ENCODE measurements at regions of chrX and their contacts with region 1.

Region 1: GRCh38 chrX:150898343-150899190 is at the start of gene CD99L2:
- DNase-seq: peak; percentile 91
- ATAC-seq: peak; percentile 91
- H3K4me3 ChIP-seq: peak within 1 kb of the TSS; percentile 8 to 79 (median 66)
- H3K4me3 Mint-ChIP-seq: peak within 1 kb of the TSS; percentile 97
- H3K27ac ChIP-seq: peak within 1 kb of the TSS; percentile 29 to 70
- H3K27ac Mint-ChIP-seq: peak within 1 kb of the TSS; percentile 88
- H3K4me1 ChIP-seq: peaks cover 0 to 10% of the 10 kb centered on the region in 2 donors
- H3K4me1 Mint-ChIP-seq: peaks cover 13% of the 10 kb centered on the region
- H3K27me3 ChIP-seq: no peaks in the 10 kb centered on the region
- H3K27me3 Mint-ChIP-seq: peaks cover 7% of the 10 kb centered on the region
- CTCF ChIP-seq: no peak
- total RNA-seq, gene CD99L2: 16.0 and 17.8 TPM in 2 replicates

Region 2: GRCh38 chrX:150365051-150365989 is 533.2 kb before region 1 on chrX:
- CTCF ChIA-PET with region 1: no interaction called
- POLR2A ChIA-PET with region 1: no interaction called
- intact Hi-C with region 1: loop called (anchors 5 kb)
- DNase-seq: peak; percentile 58
- ATAC-seq: peak; percentile 12
- H3K4me3 ChIP-seq: peak overlapping the region; percentile 39 to 62 (median 59)
- H3K4me3 Mint-ChIP-seq: peak overlapping the region; percentile 86
- H3K27ac ChIP-seq: no peak overlapping the region
- H3K27ac Mint-ChIP-seq: peak overlapping the region; percentile 20
- H3K4me1 ChIP-seq: peaks cover 17 to 43% of the 10 kb centered on the region in 2 donors
- H3K4me1 Mint-ChIP-seq: peaks cover 31% of the 10 kb centered on the region
- H3K27me3 ChIP-seq: peaks cover 0 to 9% (median 5%) of the 10 kb centered on the region in 4 experiments
- H3K27me3 Mint-ChIP-seq: peaks cover 10% of the 10 kb centered on the region
- CTCF ChIP-seq: peak; percentile 41

Region 3: GRCh38 chrX:150693775-150694574 is 204.6 kb before region 1 on chrX:
- CTCF ChIA-PET with region 1: no interaction called
- POLR2A ChIA-PET with region 1: no interaction called
- intact Hi-C with region 1: loop called (anchors 5 kb)
- DNase-seq: peak; percentile 87
- ATAC-seq: peak; percentile 65
- H3K4me3 ChIP-seq: peak overlapping the region; percentile 28 to 65 (median 57)
- H3K4me3 Mint-ChIP-seq: peak overlapping the region; percentile 98
- H3K27ac ChIP-seq: peak overlapping the region; percentile 87 to 89
- H3K27ac Mint-ChIP-seq: peak overlapping the region; percentile 100
- H3K4me1 ChIP-seq: peaks cover 53 to 67% of the 10 kb centered on the region in 2 donors
- H3K4me1 Mint-ChIP-seq: peaks cover 62% of the 10 kb centered on the region
- H3K27me3 ChIP-seq: no peaks in the 10 kb centered on the region
- H3K27me3 Mint-ChIP-seq: no peaks in the 10 kb centered on the region
- CTCF ChIP-seq: no peak

Region 4: GRCh38 chrX:150982788-150983520 is 84.4 kb after region 1 on chrX and contains the start of gene HMGB3:
- CTCF ChIA-PET with region 1: no interaction called
- POLR2A ChIA-PET with region 1: no interaction called
- intact Hi-C with region 1: loop called (anchors 1 kb)
- DNase-seq: peak; percentile 79
- ATAC-seq: peak; percentile 96
- H3K4me3 ChIP-seq: peak within 1 kb of the TSS; percentile 7 to 63 (median 49)
- H3K4me3 Mint-ChIP-seq: peak within 1 kb of the TSS; percentile 80
- H3K27ac ChIP-seq: no peak within 1 kb of the TSS
- H3K27ac Mint-ChIP-seq: no peak within 1 kb of the TSS
- H3K4me1 ChIP-seq: peaks cover 8 to 15% of the 10 kb centered on the region in 2 donors
- H3K4me1 Mint-ChIP-seq: peaks cover 8% of the 10 kb centered on the region
- H3K27me3 ChIP-seq: peaks cover 0 to 15% (median 5%) of the 10 kb centered on the region in 4 experiments
- H3K27me3 Mint-ChIP-seq: peaks cover 16% of the 10 kb centered on the region
- CTCF ChIP-seq: no peak
- total RNA-seq, gene HMGB3: 0.70 and 1.6 TPM in 2 replicates

Region 5: DNA sequence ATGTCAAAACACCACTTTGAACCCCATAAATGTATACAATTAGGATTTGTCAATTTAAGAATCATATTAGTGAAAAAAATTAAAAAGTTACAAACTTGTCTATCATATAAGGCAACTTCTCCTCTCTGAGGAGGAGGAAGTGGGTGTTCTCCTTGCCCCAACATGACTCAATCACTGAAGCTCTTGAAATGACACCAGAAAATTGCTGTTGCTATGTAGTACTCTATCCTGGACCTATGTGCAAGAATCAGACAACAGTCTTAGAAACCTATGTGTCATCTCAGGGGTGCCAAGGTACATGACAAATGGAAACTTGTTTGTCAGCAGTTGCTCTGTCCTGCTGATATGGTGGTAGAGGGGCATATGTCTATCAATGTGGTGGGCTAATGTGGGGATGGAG is 132.3 kb after region 1 on chrX:
- CTCF ChIA-PET with region 1: no interaction called
- POLR2A ChIA-PET with region 1: no interaction called
- intact Hi-C with region 1: no loop called
- DNase-seq: no peak
- ATAC-seq: no peak
- H3K4me3 ChIP-seq: no peak overlapping the region
- H3K4me3 Mint-ChIP-seq: no peak overlapping the region
- H3K27ac ChIP-seq: no peak overlapping the region
- H3K27ac Mint-ChIP-seq: no peak overlapping the region
- H3K4me1 ChIP-seq: no peaks in the 10 kb centered on the region
- H3K4me1 Mint-ChIP-seq: no peaks in the 10 kb centered on the region
- H3K27me3 ChIP-seq: peaks cover 0 to 3% (median under 1%) of the 10 kb centered on the region in 4 experiments
- H3K27me3 Mint-ChIP-seq: peaks cover 29% of the 10 kb centered on the region
- CTCF ChIP-seq: no peak

Region 6: GRCh38 chrX:151396825-151397740 is 498.5 kb after region 1 on chrX and contains the start of gene VMA21:
- CTCF ChIA-PET with region 1: no interaction called
- POLR2A ChIA-PET with region 1: no interaction called
- intact Hi-C with region 1: loop called (anchors 2 kb)
- DNase-seq: peak; percentile 90
- ATAC-seq: peak; percentile 89
- H3K4me3 ChIP-seq: peak within 1 kb of the TSS; percentile 48 to 82 (median 77)
- H3K4me3 Mint-ChIP-seq: peak within 1 kb of the TSS; percentile 90
- H3K27ac ChIP-seq: peak within 1 kb of the TSS; percentile 96 to 98
- H3K27ac Mint-ChIP-seq: peak within 1 kb of the TSS; percentile 96
- H3K4me1 ChIP-seq: peaks cover 5 to 22% of the 10 kb centered on the region in 2 donors
- H3K4me1 Mint-ChIP-seq: peaks cover 52% of the 10 kb centered on the region
- H3K27me3 ChIP-seq: no peaks in the 10 kb centered on the region
- H3K27me3 Mint-ChIP-seq: no peaks in the 10 kb centered on the region
- CTCF ChIP-seq: no peak
- total RNA-seq, gene VMA21: 22.6 and 22.7 TPM in 2 replicates

Measured in B cell (primary cell).